Body of pancreas (tissue), 4 donors: ENCODE measurements at regions of chr2 and their contacts with region 1.

Region 1: GRCh38 chr2:69933839-69934613 is 19.1 kb downstream of the MXD1 start:
- DNase-seq: peak in 1 of 4 donors; percentile 47
- ATAC-seq: no peak
- H3K4me3 ChIP-seq: no peak overlapping the region
- H3K27ac ChIP-seq: peak overlapping the region in 1 of 4 donors; percentile 10
- H3K4me1 ChIP-seq: peaks cover 5% of the 10 kb centered on the region
- H3K27me3 ChIP-seq: no peaks in the 10 kb centered on the region
- CTCF ChIP-seq: no peak
- POLR2A ChIP-seq: no peak

Region 2: GRCh38 chr2:70043252-70043875 is 109.3 kb after region 1 on chr2:
- intact Hi-C with region 1: loop called (anchors 10 kb)
- DNase-seq: peak in 1 of 4 donors; percentile 63
- ATAC-seq: no peak
- H3K4me3 ChIP-seq: no peak overlapping the region
- H3K27ac ChIP-seq: peak overlapping the region in 1 of 4 donors; percentile 11
- H3K4me1 ChIP-seq: no peaks in the 10 kb centered on the region
- H3K27me3 ChIP-seq: no peaks in the 10 kb centered on the region
- CTCF ChIP-seq: no peak
- POLR2A ChIP-seq: no peak